Natural killer cell (primary cell): ENCODE measurements at regions of chr22 and their contacts with region 1.

Region 1: DNA sequence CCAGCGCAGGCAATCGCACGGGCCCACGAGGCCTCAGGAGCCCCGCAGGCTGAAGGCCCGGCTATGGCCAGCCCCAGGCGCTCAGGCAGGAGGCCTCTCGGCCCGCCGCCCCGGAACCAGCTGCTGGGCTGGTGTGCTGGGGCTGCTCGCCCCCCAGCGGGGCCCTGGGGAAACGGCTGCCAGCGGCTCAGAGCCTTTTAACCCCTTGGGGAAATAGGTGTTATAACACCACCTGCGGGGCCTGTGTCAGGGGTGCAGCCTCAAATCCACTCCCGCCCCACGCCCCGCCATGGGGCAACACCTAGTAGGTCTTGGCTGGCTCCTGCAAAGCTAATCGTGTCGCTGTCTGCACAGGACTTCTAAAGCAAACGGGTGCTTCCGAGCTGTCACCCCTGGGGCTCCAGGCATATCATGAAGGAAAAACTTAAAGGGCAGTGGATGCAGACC is 237.4 kb downstream of the TTC28 start:
- DNase-seq: peak; percentile 47 to 78
- ATAC-seq: peak; percentile 82 to 94 (median 89)
- H3K4me3 ChIP-seq: peak overlapping the region; percentile 52
- H3K4me3 Mint-ChIP-seq: peak overlapping the region; percentile 93
- H3K27ac ChIP-seq: no peak overlapping the region
- H3K27ac Mint-ChIP-seq: peak overlapping the region in 1 of 2 donors; percentile 40
- H3K4me1 ChIP-seq: peaks cover 16% of the 10 kb centered on the region
- H3K4me1 Mint-ChIP-seq: peaks cover 10 to 14% of the 10 kb centered on the region in 2 donors
- H3K27me3 ChIP-seq: no peaks in the 10 kb centered on the region
- H3K27me3 Mint-ChIP-seq: peaks cover 7% of the 10 kb centered on the region in 2 donors
- CTCF ChIP-seq: peak; percentile 36

Region 2: GRCh38 chr22:27880778-27881394 is 561.4 kb before region 1 on chr22:
- intact Hi-C with region 1: loop called (anchors 10 kb)
- DNase-seq: peak in 1 of 2 donors; percentile 69
- ATAC-seq: peak; percentile 28 to 62 (median 47)
- H3K4me3 ChIP-seq: no peak overlapping the region
- H3K4me3 Mint-ChIP-seq: no peak overlapping the region
- H3K27ac ChIP-seq: no peak overlapping the region
- H3K27ac Mint-ChIP-seq: no peak overlapping the region
- H3K4me1 ChIP-seq: peaks cover 4% of the 10 kb centered on the region
- H3K4me1 Mint-ChIP-seq: peaks cover 22 to 32% of the 10 kb centered on the region in 2 donors
- H3K27me3 ChIP-seq: no peaks in the 10 kb centered on the region
- H3K27me3 Mint-ChIP-seq: no peaks in the 10 kb centered on the region
- CTCF ChIP-seq: peak; percentile 63

Region 3: GRCh38 chr22:28019881-28020871 is 422.1 kb before region 1 on chr22:
- intact Hi-C with region 1: loop called (anchors 5 kb)
- DNase-seq: peak; percentile 52 to 74
- ATAC-seq: peak; percentile 67 to 90 (median 80)
- H3K4me3 ChIP-seq: no peak overlapping the region
- H3K4me3 Mint-ChIP-seq: no peak overlapping the region
- H3K27ac ChIP-seq: no peak overlapping the region
- H3K27ac Mint-ChIP-seq: peak overlapping the region in 1 of 2 donors; percentile 47
- H3K4me1 ChIP-seq: no peaks in the 10 kb centered on the region
- H3K4me1 Mint-ChIP-seq: peaks cover 5 to 6% of the 10 kb centered on the region in 2 donors
- H3K27me3 ChIP-seq: no peaks in the 10 kb centered on the region
- H3K27me3 Mint-ChIP-seq: peaks cover 0 to 3% of the 10 kb centered on the region in 2 donors
- CTCF ChIP-seq: peak; percentile 76